ENCODE measurements at regions of chr3 and their contacts with region 1.

Region 1: DNA sequence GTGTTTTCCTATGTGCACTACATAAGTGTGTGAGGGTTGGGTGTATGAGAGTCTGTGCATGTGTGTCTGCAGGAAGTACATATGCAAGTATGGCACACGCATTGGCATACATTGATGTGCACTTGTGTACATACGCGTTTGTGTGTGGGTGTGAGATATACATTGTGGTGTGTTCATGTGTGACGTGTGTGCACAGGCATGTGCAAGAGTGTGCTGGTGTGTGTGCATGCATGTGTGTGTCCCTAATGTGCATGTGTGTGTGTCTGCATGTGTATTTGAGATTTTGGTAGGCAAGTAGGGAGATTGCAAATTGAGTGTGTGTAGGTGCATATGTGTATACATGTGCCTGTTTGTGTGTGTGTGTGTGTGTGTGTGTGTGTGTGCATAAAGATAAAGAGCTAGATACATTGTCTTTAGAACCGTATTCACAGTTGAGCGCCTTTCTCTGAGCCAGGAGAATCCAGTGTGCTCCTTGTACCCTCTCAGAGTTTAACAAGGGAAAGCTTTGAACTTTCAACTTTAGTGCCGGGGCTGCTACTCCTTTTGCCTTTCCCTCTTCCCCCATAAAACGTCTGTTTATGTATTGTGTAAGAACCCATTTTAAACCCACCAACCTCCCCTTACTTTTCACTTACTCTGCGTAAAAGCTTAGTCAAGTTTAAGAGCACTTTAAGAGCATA is 152.4 kb upstream of the CHL1 start:
- DNase-seq: no peak
- ATAC-seq: no peak
- H3K4me3 ChIP-seq: no peak overlapping the region
- H3K27ac ChIP-seq: no peak overlapping the region
- H3K4me1 ChIP-seq: no peaks in the 10 kb centered on the region
- CTCF ChIP-seq: no peak
- EP300 ChIP-seq: no peak
- POLR2A ChIP-seq: no peak
- RAD21 ChIP-seq: no peak

Region 2: GRCh38 chr3:354432-354831 is 310.3 kb after region 1 on chr3:
- CTCF ChIA-PET with region 1: interaction called, 67 read pairs
- POLR2A ChIA-PET with region 1: no interaction called
- DNase-seq: peak; percentile 15 to 51
- ATAC-seq: peak in 1 of 2 experiments; percentile 61; a peak in 3 of 6 replicates
- H3K4me3 ChIP-seq: no peak overlapping the region
- H3K27ac ChIP-seq: no peak overlapping the region
- H3K4me1 ChIP-seq: no peaks in the 10 kb centered on the region
- CTCF ChIP-seq: peak; percentile 71
- EP300 ChIP-seq: no peak
- POLR2A ChIP-seq: no peak
- RAD21 ChIP-seq: peak; percentile 76 to 82

Measured in A549 (cell line).